HEK293 (cell line): ENCODE measurements at regions of chr1 and their contacts with region 1.

Region 1: DNA sequence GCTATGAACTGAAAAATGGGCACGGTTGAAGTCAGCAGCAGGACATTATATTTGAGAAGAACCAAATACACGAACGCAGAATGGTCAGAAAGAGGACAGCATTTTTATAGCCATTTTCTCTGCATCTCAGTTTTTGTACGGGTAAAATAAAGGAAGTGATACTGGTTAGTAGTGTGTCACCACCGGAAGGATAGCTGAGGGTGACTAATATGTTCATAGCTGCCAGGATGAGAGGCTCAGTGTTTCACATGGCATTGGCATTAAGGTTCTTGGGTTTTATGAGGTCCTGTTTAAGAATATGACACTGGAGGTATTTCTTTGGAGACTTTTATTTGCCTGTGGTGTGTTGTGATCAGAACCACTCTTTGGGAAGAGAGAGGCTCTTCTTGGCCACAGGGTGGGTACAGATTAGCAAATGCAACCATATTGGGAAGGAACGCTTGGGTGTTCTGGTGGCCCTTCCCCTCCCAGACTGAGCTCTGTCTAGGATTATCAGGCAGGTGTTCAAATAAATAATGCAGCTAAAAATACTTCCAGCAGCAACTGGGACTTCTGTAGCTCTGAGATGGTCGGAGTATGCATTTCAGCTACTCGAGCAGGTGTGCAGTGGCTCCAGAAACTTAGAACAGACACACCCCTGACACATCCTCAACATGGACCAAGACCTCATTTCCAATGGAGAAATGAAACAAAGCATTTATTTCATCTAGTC is 158.2 kb downstream of the PBX1 start:
- H3K4me3 ChIP-seq: no peak overlapping the region
- H3K27ac ChIP-seq: no peak overlapping the region
- H3K4me1 ChIP-seq: no peaks in the 10 kb centered on the region
- CTCF ChIP-seq: no peak

Region 2: GRCh38 chr1:164635803-164636731 is 81.1 kb before region 1 on chr1:
- CTCF ChIA-PET with region 1: interaction called, 10 read pairs
- POLR2A ChIA-PET with region 1: no interaction called
- H3K4me3 ChIP-seq: no peak overlapping the region
- H3K27ac ChIP-seq: 0 out of 2 replicates have a peak overlapping the region, but pooled peaks have one; percentile 13
- H3K4me1 ChIP-seq: peaks cover 37% of the 10 kb centered on the region
- CTCF ChIP-seq: no peak

Region 3: GRCh38 chr1:164695956-164696665 is 21.0 kb before region 1 on chr1:
- CTCF ChIA-PET with region 1: no interaction called
- POLR2A ChIA-PET with region 1: no interaction called
- H3K4me3 ChIP-seq: no peak overlapping the region
- H3K27ac ChIP-seq: no peak overlapping the region
- H3K4me1 ChIP-seq: no peaks in the 10 kb centered on the region
- CTCF ChIP-seq: no peak

Region 4: DNA sequence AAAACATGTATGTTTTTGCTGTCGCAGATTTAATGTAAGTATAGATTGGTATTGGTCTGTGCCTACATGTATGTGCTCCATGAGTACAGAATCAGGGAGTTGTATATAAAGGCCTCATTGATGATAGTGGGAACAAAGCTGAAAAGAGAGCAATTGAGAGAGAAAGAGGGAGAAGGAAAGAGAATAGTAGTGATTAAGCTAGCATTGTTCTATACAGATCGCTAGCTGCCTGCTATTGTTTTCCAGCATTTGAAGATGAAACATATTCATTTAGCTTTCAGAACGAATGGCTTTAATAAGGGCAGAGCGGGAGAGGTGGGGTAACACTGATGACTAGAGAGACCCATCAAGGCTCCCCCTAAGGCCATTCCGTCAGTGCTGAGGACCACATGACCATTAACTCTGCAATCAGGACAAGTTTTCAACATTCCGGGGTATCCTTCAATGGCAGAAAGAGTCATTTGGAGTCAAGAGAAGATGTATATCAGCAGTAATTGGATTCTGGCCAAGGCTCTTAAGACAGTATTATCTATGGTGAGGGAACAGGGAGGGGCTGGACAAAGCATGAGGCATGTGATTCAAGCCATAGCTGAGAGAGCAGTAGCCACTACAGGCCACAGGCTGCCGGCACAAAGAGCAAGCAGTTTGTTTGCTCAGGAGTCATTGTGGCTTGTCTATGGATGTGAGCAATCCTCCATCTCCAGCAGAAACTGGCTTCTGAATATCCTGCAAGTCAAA is 18.3 kb after region 1 on chr1:
- CTCF ChIA-PET with region 1: no interaction called
- POLR2A ChIA-PET with region 1: no interaction called
- H3K4me3 ChIP-seq: no peak overlapping the region
- H3K27ac ChIP-seq: no peak overlapping the region
- H3K4me1 ChIP-seq: no peaks in the 10 kb centered on the region
- CTCF ChIP-seq: no peak

Region 5: DNA sequence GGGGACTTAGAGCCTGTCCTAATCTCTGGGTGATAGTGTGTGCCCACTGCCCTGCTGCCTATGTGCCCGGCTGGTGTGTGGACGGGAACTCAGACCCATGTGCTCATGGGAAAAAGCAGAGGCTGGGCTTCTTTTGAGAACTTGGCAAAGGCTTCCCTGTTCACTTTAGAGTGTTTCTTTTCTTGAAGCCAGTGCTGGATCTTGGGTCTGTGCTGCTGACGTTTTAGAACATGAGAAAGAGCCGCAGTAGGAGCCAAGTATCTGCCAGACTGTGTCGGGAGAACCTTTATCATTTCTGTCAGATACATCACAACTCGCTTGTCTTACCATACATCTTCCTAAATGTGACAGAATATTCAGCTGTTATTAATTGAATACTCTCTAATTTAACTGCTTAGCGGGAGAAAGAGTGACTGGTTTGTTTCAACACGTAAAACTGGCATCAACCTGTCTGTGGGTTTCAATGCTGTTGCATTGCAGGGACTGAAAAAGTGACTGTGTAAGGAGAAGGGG is 37.0 kb after region 1 on chr1:
- CTCF ChIA-PET with region 1: no interaction called
- POLR2A ChIA-PET with region 1: no interaction called
- H3K4me3 ChIP-seq: no peak overlapping the region
- H3K27ac ChIP-seq: no peak overlapping the region
- H3K4me1 ChIP-seq: peaks cover 12% of the 10 kb centered on the region; the same call in 1 of the 2 replicates
- CTCF ChIP-seq: no peak